ENCODE measurements at regions of chr14 and their contacts with region 1.

Region 1: GRCh38 chr14:53295985-53296582 is 143.0 kb upstream of the DDHD1 start:
- DNase-seq: no peak
- ATAC-seq: no peak

Region 2: DNA sequence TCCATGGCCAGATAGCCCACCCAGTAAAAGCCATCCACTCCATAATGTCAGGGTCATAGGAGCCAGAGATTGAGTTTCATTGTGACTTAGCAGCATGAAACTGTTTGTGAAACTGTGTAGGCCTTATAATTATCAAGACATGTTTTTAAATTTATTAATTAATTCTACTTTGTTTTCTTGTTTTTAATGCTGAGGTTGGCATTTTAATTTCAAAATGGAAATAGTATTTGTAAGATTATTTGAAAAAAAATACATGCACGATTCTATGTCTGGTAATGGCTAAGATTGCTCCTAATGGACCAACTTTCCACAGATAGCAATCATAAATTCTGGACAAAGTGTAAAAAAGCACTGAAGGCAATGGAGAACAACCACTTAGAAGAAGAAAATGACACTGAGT is 676.4 kb before region 1 on chr14:
- intact Hi-C with region 1: no loop called
- DNase-seq: no peak
- ATAC-seq: no peak

Region 3: GRCh38 chr14:53140585-53140984 is 155.5 kb before region 1 on chr14:
- intact Hi-C with region 1: no loop called
- DNase-seq: no peak
- ATAC-seq: no peak

Region 4: GRCh38 chr14:53152890-53153701 is 143.0 kb before region 1 on chr14 and contains the start of gene DDHD1:
- intact Hi-C with region 1: loop called (anchors 10 kb)
- DNase-seq: peak; percentile 90
- ATAC-seq: peak; percentile 95
- total RNA-seq, gene DDHD1: 6.7 TPM

Measured in Right ventricle myocardium inferior (tissue), 1 donor.